OCI-LY7 (cell line): ENCODE measurements at regions of chr2 and their contacts with region 1.

Region 1: DNA sequence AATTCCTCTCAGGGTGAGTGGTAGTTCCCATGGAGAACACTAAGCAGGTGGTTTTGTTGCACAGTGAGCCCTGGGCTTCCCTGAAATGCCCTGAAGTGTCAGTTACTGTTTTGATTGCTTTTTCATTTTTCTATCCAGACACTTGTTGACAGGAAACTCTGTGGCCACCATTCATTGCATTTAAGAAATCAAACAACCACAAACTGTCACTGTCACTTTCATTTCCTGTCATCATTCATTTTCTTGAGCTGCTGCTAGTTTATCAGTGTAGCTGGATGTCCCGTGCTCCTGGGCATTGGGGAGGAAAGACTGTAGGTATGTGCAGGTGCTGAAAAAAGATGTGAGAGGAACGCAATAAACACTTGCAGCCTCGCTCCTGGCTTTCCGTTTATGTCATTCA is 891.6 kb upstream of the ZEB2 start:
- DNase-seq: peak; percentile 97
- H3K4me3 ChIP-seq: peak overlapping the region; percentile 43
- H3K27ac ChIP-seq: peak overlapping the region; percentile 99
- H3K4me1 ChIP-seq: peaks cover 41% of the 10 kb centered on the region
- CTCF ChIP-seq: no peak

Region 2: GRCh38 chr2:144516981-144517865 is 894.3 kb before region 1 on chr2:
- CTCF ChIA-PET with region 1: no interaction called
- POLR2A ChIA-PET with region 1: no interaction called
- intact Hi-C with region 1: loop called (anchors 5 kb)
- DNase-seq: peak; percentile 64
- H3K4me3 ChIP-seq: peak overlapping the region; percentile 83
- H3K27ac ChIP-seq: no peak overlapping the region
- H3K4me1 ChIP-seq: peaks cover 36% of the 10 kb centered on the region
- CTCF ChIP-seq: no peak

Region 3: GRCh38 chr2:144703852-144704708 is 707.4 kb before region 1 on chr2:
- CTCF ChIA-PET with region 1: no interaction called
- POLR2A ChIA-PET with region 1: interaction called, 3 read pairs
- intact Hi-C with region 1: loop called (anchors 1 kb)
- DNase-seq: peak; percentile 97
- H3K4me3 ChIP-seq: peak overlapping the region; percentile 51
- H3K27ac ChIP-seq: peak overlapping the region; percentile 98
- H3K4me1 ChIP-seq: peaks cover 58% of the 10 kb centered on the region
- CTCF ChIP-seq: no peak

Region 4: DNA sequence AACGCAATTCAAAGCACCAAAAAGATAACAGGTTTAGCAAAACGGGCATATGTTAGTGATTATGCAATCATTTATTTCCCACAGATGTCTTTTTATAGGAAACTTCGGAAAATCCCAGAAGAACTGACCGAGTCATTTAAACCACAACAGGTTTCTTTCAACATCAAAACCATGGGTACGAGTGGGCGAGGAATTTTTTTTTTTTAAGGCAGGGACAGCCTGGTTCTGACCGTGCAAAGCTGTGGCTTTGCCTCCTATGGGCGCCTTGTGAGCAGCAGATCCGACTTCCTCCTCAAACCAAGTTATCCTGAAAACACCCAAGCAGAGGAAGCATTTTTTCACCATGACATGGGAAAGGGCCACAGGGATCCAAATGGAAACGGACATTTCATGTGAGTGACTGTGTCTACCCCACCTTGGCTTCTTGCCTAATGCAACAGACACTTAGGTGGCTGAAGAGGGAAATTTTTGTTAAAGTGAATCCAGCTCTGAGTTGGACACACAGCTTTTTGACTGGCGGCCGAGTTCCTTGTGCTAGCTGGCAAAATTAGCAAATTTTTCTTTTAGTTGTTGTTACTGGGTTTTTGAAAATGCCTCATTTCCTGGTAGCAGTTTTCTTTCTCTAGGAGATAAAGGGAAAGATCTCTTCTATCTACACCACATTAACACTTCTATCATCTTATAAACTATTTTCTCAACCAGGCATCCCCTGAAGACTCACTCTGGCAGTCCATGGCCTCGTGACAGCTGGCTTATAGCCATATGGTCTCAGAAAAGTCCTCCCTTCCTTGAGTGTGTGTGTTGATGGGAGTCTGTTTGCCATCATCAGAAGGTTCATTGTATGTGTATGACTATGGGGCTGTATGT is 404.2 kb before region 1 on chr2:
- CTCF ChIA-PET with region 1: no interaction called
- POLR2A ChIA-PET with region 1: no interaction called
- intact Hi-C with region 1: loop called (anchors 10 kb)
- DNase-seq: no peak
- H3K4me3 ChIP-seq: no peak overlapping the region
- H3K27ac ChIP-seq: no peak overlapping the region
- H3K4me1 ChIP-seq: peaks cover 4% of the 10 kb centered on the region
- CTCF ChIP-seq: no peak

Region 5: GRCh38 chr2:145221032-145221431 is 190.5 kb before region 1 on chr2:
- CTCF ChIA-PET with region 1: no interaction called
- POLR2A ChIA-PET with region 1: interaction called, 9 read pairs
- intact Hi-C with region 1: loop called (anchors 1 kb)
- DNase-seq: peak; percentile 13
- H3K4me3 ChIP-seq: no peak overlapping the region
- H3K27ac ChIP-seq: peak overlapping the region; percentile 80
- H3K4me1 ChIP-seq: peaks cover 36% of the 10 kb centered on the region
- CTCF ChIP-seq: no peak

Region 6: GRCh38 chr2:145587922-145588321 is 176.4 kb after region 1 on chr2:
- CTCF ChIA-PET with region 1: no interaction called
- POLR2A ChIA-PET with region 1: no interaction called
- intact Hi-C with region 1: loop called (anchors 5 kb)
- DNase-seq: no peak
- H3K4me3 ChIP-seq: no peak overlapping the region
- H3K27ac ChIP-seq: no peak overlapping the region
- H3K4me1 ChIP-seq: peaks cover 7% of the 10 kb centered on the region
- CTCF ChIP-seq: no peak

Region 7: GRCh38 chr2:145682546-145683157 is 271.2 kb after region 1 on chr2:
- CTCF ChIA-PET with region 1: no interaction called
- POLR2A ChIA-PET with region 1: no interaction called
- intact Hi-C with region 1: no loop called
- DNase-seq: no peak
- H3K4me3 ChIP-seq: no peak overlapping the region
- H3K27ac ChIP-seq: no peak overlapping the region
- H3K4me1 ChIP-seq: no peaks in the 10 kb centered on the region
- CTCF ChIP-seq: no peak

Region 8: DNA sequence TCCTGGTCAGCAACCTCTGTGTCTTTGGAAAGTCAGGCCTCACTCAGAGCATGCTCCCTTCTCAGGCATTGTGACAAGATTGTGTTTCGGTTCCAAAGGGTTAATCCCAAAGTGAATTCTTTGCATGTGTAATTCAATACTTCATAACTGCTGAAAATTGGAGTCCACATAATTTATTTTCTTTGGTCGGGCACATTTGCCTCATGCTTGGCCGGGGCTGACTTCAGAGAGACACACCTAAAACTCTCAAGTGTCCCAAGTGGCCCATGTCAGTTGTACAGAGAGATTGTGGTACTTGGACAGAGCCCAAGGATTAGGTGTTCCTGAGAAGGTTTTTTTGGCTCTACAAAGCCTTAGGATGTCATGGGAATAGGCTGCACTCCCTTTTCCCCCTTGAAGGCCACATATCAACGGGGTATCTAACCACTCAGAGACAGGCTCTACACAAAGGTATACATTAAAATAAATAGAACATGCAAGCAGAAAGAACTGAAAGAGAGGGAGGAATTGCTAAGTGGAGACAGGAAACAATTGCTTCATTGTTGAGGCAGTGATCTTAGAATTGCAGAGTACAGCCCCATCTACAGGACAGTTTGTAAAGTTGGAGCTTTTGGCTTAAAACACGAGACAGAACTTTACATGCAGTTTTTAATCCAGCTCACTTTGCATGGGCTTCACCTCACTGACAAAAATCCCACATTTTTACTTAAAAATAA is 340.8 kb after region 1 on chr2:
- CTCF ChIA-PET with region 1: no interaction called
- POLR2A ChIA-PET with region 1: interaction called, 3 read pairs
- intact Hi-C with region 1: loop called (anchors 2 kb)
- DNase-seq: peak; percentile 79
- H3K4me3 ChIP-seq: peak overlapping the region; percentile 3
- H3K27ac ChIP-seq: peak overlapping the region; percentile 8
- H3K4me1 ChIP-seq: peaks cover 34% of the 10 kb centered on the region
- CTCF ChIP-seq: peak; percentile 90